K562 (cell line): ENCODE measurements at regions of chr19 and their contacts with region 1.

Region 1: DNA sequence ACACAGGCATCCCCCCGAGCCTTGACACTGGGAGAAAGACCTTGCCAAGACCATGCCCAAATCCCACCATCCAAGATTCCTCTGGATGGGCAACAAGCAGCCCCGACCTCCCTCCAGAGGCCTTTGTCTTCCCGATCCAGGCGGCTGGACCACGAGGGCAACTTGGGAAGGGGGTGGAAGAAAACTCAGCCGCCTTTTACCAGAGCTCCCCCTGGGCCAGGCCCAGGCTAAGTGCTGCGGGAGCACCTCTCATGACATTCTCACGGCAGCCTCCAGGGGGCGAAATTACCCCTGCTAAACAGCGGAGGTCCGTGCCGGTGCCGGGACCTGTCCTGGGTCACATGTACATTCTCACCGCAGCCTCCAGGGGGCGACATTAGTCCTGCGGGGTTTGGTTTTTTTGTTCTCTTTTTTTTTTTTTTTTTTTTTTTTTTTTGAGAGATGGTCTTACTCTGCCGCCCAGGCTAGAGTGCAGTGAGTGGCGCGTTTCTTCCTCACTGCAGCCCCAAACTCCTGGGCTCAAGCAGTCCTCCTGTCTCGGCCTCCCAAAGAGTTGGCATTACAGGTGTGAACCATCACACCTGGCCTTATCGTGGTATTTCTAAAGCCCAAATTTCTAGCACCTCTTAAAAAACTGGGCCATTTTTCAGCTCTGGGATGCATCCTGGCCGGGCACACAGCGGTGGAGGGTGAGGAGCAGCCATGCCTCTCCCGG is 2.1 kb upstream of the RSPH6A start:
- DNase-seq: peak; percentile 96 to 98 (median 98)
- ATAC-seq: peak; percentile 98
- H3K4me3 ChIP-seq: no peak overlapping the region
- H3K27ac ChIP-seq: no peak overlapping the region
- H3K4me1 ChIP-seq: peaks cover 0 to 41% of the 10 kb centered on the region in 2 experiments; a peak in 3 of 5 replicates
- H3K27me3 ChIP-seq: no peaks in the 10 kb centered on the region
- CTCF ChIP-seq: peak; percentile 99 to 100 (median 99)
- EP300 ChIP-seq: peak; percentile 35; the same call in 1 of the 2 replicates
- POLR2A ChIP-seq: no peak
- RAD21 ChIP-seq: peak; percentile 68 to 84

Region 2: DNA sequence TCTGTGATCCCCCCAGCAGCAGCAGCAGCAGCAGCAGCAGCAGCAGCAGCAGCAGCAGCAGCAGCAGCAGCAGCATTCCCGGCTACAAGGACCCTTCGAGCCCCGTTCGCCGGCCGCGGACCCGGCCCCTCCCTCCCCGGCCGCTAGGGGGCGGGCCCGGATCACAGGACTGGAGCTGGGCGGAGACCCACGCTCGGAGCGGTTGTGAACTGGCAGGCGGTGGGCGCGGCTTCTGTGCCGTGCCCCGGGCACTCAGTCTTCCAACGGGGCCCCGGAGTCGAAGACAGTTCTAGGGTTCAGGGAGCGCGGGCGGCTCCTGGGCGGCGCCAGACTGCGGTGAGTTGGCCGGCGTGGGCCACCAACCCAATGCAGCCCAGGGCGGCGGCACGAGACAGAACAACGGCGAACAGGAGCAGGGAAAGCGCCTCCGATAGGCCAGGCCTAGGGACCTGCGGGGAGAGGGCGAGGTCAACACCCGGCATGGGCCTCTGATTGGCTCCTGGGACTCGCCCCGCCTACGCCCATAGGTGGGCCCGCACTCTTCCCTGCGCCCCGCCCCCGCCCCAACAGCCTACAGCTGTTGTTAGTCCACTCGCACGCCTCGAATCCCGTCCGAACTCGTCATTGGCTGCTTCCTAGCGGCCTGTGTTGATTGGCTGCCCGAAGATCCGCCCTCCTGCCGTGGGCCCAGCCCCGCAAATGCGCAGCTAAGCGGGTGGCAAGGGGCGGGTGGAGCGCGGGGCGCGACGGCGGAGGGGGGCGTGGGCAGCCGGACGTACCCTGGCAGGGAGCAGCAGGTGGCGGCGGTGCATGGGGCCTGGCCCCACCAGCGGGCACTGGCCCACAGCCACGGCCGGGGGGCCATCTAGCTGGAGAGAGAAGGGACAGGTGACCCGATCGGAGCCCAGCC is 46.7 kb before region 1 on chr19:
- CTCF ChIA-PET with region 1: interaction called, 14 read pairs
- POLR2A ChIA-PET with region 1: interaction called, 4 read pairs
- in situ Hi-C with region 1: no loop called
- intact Hi-C with region 1: no loop called
- DNase-seq: peak; percentile 93 to 99 (median 96)
- ATAC-seq: peak; percentile 87
- H3K4me3 ChIP-seq: peak overlapping the region; percentile 56
- H3K27ac ChIP-seq: peak overlapping the region; percentile 75
- H3K4me1 ChIP-seq: peaks cover 10 to 69% of the 10 kb centered on the region in 2 experiments; a peak in 4 of 5 replicates
- H3K27me3 ChIP-seq: no peaks in the 10 kb centered on the region
- CTCF ChIP-seq: peak; percentile 83 to 91 (median 91)
- EP300 ChIP-seq: no peak
- POLR2A ChIP-seq: peak; percentile 73
- RAD21 ChIP-seq: peak; percentile 59 to 61

Region 3: DNA sequence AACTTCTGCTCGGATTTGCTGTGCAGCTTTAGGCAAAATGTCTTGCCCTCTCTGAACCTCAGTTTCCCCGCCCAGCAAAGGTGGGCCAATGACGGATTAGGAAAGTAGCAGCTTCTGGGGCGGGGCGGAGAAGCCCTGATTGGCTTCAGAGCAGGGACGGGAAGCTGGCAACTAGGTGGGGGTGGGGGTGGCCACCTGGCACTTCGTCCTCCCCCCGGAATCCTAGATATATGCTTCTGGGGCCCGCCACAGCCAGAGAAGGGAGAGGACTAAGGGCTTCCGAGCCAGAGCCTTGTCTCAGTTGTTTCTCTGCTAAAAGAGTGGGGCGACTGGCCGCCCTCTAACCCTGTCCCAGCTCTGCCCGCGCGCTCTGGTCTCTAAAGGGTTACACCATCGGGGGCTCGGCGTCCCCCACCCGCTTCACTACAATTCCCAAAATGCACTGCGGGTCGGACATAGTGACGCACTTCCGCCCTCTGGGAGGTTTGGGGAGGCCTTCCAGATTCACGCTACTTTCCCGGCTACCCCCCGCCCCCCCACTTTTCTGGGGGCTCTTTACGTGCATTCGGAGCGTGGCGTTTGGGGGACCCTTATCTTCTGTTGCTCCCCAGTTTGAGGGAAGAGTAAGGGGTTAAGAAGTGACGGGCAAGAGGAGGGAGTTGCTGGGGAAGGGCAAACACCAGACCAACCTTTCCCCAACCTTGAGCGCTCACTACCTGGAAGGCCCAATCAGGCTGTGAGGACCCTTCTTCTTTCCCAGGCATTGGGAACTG is 69.4 kb after region 1 on chr19:
- CTCF ChIA-PET with region 1: interaction called, 56 read pairs
- POLR2A ChIA-PET with region 1: interaction called, 5 read pairs
- in situ Hi-C with region 1: no loop called
- intact Hi-C with region 1: loop called (anchors 1 kb)
- DNase-seq: peak; percentile 85 to 96 (median 90)
- ATAC-seq: peak; percentile 74
- H3K4me3 ChIP-seq: peak overlapping the region; percentile 58
- H3K27ac ChIP-seq: peak overlapping the region; percentile 94
- H3K4me1 ChIP-seq: peaks cover 37 to 63% of the 10 kb centered on the region in 2 experiments; a peak in 4 of 5 replicates
- H3K27me3 ChIP-seq: no peaks in the 10 kb centered on the region
- CTCF ChIP-seq: no peak
- EP300 ChIP-seq: no peak
- POLR2A ChIP-seq: peak; percentile 72
- RAD21 ChIP-seq: no peak

Region 4: GRCh38 chr19:46009530-46010510 is 192.7 kb after region 1 on chr19:
- CTCF ChIA-PET with region 1: no interaction called
- POLR2A ChIA-PET with region 1: no interaction called
- in situ Hi-C with region 1: no loop called
- intact Hi-C with region 1: loop called (anchors 5 kb)
- DNase-seq: peak; percentile 72 to 83 (median 80)
- ATAC-seq: peak; percentile 97
- H3K4me3 ChIP-seq: no peak overlapping the region
- H3K27ac ChIP-seq: no peak overlapping the region
- H3K4me1 ChIP-seq: peaks cover 3 to 12% of the 10 kb centered on the region in 2 experiments; a peak in 2 of 5 replicates
- H3K27me3 ChIP-seq: no peaks in the 10 kb centered on the region
- CTCF ChIP-seq: peak; percentile 79 to 90 (median 82)
- EP300 ChIP-seq: no peak
- POLR2A ChIP-seq: no peak
- RAD21 ChIP-seq: peak in 1 of 2 experiments; percentile 54; a peak in 2 of 4 replicates

Region 5: GRCh38 chr19:46030812-46031550 is 213.8 kb after region 1 on chr19:
- CTCF ChIA-PET with region 1: interaction called, 13 read pairs
- POLR2A ChIA-PET with region 1: no interaction called
- in situ Hi-C with region 1: no loop called
- intact Hi-C with region 1: no loop called
- DNase-seq: no peak
- ATAC-seq: no peak
- H3K4me3 ChIP-seq: no peak overlapping the region
- H3K27ac ChIP-seq: no peak overlapping the region
- H3K4me1 ChIP-seq: no peaks in the 10 kb centered on the region
- H3K27me3 ChIP-seq: peaks cover 2 to 21% of the 10 kb centered on the region in 2 experiments; a peak in 2 of 5 replicates
- CTCF ChIP-seq: no peak
- EP300 ChIP-seq: no peak
- POLR2A ChIP-seq: no peak
- RAD21 ChIP-seq: no peak